ENCODE measurements at regions of chr5 and their contacts with region 1.

Region 1: GRCh38 chr5:57488215-57488955 is 5.8 kb upstream of the ACTBL2 start:
- DNase-seq: no peak
- H3K4me3 ChIP-seq: no peak overlapping the region
- H3K27ac ChIP-seq: no peak overlapping the region
- H3K4me1 ChIP-seq: no peaks in the 10 kb centered on the region
- H3K27me3 ChIP-seq: no peaks in the 10 kb centered on the region
- CTCF ChIP-seq: no peak
- POLR2A ChIP-seq: no peak

Region 2: GRCh38 chr5:57327561-57328394 is 160.6 kb before region 1 on chr5:
- intact Hi-C with region 1: loop called (anchors 10 kb)
- DNase-seq: no peak
- H3K4me3 ChIP-seq: no peak overlapping the region
- H3K27ac ChIP-seq: no peak overlapping the region
- H3K4me1 ChIP-seq: no peaks in the 10 kb centered on the region
- H3K27me3 ChIP-seq: peaks cover under 1% of the 10 kb centered on the region
- CTCF ChIP-seq: no peak
- POLR2A ChIP-seq: no peak

Region 3: GRCh38 chr5:57442080-57442839 is 46.1 kb before region 1 on chr5:
- intact Hi-C with region 1: no loop called
- DNase-seq: no peak
- H3K4me3 ChIP-seq: no peak overlapping the region
- H3K27ac ChIP-seq: no peak overlapping the region
- H3K4me1 ChIP-seq: no peaks in the 10 kb centered on the region
- H3K27me3 ChIP-seq: no peaks in the 10 kb centered on the region
- CTCF ChIP-seq: no peak
- POLR2A ChIP-seq: no peak

Region 4: DNA sequence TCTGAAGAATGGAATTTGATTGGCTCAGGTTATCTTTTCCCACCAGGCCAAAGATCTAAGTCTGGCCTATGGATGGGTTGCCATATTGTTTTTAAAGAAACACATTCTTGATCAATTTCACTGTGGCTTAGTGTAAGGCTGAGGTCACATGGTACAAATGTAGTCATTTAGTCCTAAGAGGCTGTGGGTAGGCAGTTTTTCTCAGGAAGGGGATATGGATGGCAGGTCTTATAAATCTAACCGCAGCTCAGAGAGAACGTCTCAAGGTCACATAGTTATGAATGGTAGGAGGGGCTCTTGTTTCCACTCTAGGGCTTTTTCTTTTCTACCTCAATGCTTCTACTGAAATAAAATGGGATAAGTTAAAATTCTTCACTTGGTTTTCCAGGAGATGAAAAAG is 122.8 kb after region 1 on chr5:
- intact Hi-C with region 1: no loop called
- DNase-seq: no peak
- H3K4me3 ChIP-seq: no peak overlapping the region
- H3K27ac ChIP-seq: no peak overlapping the region
- H3K4me1 ChIP-seq: no peaks in the 10 kb centered on the region
- H3K27me3 ChIP-seq: no peaks in the 10 kb centered on the region
- CTCF ChIP-seq: no peak
- POLR2A ChIP-seq: no peak

Measured in prostate gland (tissue), 2 donors.